CD8-positive, alpha-beta T cell (primary cell): ENCODE measurements at regions of chr6 and their contacts with region 1.

Region 1: DNA sequence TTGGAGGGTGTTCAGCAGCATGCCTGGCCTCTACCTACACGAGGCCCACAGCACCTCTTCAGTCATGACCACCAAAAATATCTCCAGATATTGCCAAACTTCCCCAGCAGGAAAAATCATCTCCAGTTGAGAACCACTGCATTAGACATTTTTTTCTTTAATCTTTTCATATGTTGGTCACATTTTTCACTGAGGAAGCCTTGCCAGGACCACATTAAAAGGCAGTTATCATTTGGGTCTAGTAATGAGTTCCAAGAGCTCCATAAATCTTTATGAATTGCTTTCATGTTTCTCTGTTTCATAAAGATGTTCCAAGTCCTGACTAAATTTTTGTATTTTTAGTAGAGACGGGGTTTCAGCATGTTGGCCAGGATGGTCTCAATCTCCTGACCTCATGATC is 28.8 kb downstream of the MTRES1 start:
- DNase-seq: no peak
- ATAC-seq: no peak
- H3K4me3 ChIP-seq: no peak overlapping the region
- H3K4me3 Mint-ChIP-seq: no peak overlapping the region
- H3K27ac ChIP-seq: no peak overlapping the region
- H3K27ac Mint-ChIP-seq: no peak overlapping the region
- H3K4me1 ChIP-seq: peaks cover 10% of the 10 kb centered on the region
- H3K4me1 Mint-ChIP-seq: peaks cover 10% of the 10 kb centered on the region
- H3K27me3 ChIP-seq: no peaks in the 10 kb centered on the region
- H3K27me3 Mint-ChIP-seq: no peaks in the 10 kb centered on the region
- CTCF ChIP-seq: no peak

Region 2: DNA sequence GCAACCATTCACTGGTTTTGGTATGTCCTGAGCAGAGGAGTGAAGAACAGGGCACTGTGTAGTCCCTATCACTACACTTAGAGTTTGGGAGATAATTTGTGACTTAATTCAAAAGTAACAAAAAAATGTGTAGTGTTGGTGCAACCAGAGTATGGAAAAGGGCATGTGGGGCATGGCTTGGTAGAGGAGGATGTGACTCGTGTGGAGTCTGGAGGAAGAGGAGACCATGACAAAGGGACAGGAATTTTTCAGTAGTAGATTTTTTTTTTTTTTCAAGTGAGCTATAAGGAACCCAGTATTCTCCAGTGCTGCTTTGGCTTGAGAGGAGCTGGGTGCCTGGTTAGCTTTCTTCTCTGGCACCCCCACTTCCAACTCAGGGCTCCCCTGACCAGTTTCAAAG is 23.7 kb before region 1 on chr6:
- CTCF ChIA-PET with region 1: interaction called, 3 read pairs
- POLR2A ChIA-PET with region 1: no interaction called
- intact Hi-C with region 1: loop called in 1 of 2 experiments (anchors 1 kb)
- DNase-seq: no peak
- ATAC-seq: no peak
- H3K4me3 ChIP-seq: no peak overlapping the region
- H3K4me3 Mint-ChIP-seq: no peak overlapping the region
- H3K27ac ChIP-seq: no peak overlapping the region
- H3K27ac Mint-ChIP-seq: no peak overlapping the region
- H3K4me1 ChIP-seq: peaks cover 10% of the 10 kb centered on the region
- H3K4me1 Mint-ChIP-seq: peaks cover 45% of the 10 kb centered on the region
- H3K27me3 ChIP-seq: no peaks in the 10 kb centered on the region
- H3K27me3 Mint-ChIP-seq: no peaks in the 10 kb centered on the region
- CTCF ChIP-seq: no peak

Region 3: GRCh38 chr6:107209406-107210305 is 152.9 kb after region 1 on chr6:
- CTCF ChIA-PET with region 1: no interaction called
- POLR2A ChIA-PET with region 1: no interaction called
- intact Hi-C with region 1: no loop called
- DNase-seq: no peak
- ATAC-seq: no peak
- H3K4me3 ChIP-seq: no peak overlapping the region
- H3K4me3 Mint-ChIP-seq: no peak overlapping the region
- H3K27ac ChIP-seq: no peak overlapping the region
- H3K27ac Mint-ChIP-seq: no peak overlapping the region
- H3K4me1 ChIP-seq: no peaks in the 10 kb centered on the region
- H3K4me1 Mint-ChIP-seq: no peaks in the 10 kb centered on the region
- H3K27me3 ChIP-seq: no peaks in the 10 kb centered on the region
- H3K27me3 Mint-ChIP-seq: no peaks in the 10 kb centered on the region
- CTCF ChIP-seq: no peak